ENCODE measurements at regions of chr21 and their contacts with region 1.

Region 1: GRCh38 chr21:28856588-28857250 is 136.0 kb downstream of the LTN1 start:
- DNase-seq: no peak
- ATAC-seq: no peak
- H3K4me3 ChIP-seq: no peak overlapping the region
- H3K4me3 Mint-ChIP-seq: no peak overlapping the region
- H3K27ac ChIP-seq: no peak overlapping the region
- H3K27ac Mint-ChIP-seq: no peak overlapping the region
- H3K4me1 ChIP-seq: no peaks in the 10 kb centered on the region
- H3K4me1 Mint-ChIP-seq: peaks cover 0 to 17% (median 7%) of the 10 kb centered on the region in 7 donors
- H3K27me3 ChIP-seq: no peaks in the 10 kb centered on the region
- H3K27me3 Mint-ChIP-seq: no peaks in the 10 kb centered on the region

Region 2: GRCh38 chr21:28754127-28754611 is 102.5 kb before region 1 on chr21:
- CTCF ChIA-PET with region 1: no interaction called
- POLR2A ChIA-PET with region 1: no interaction called
- intact Hi-C with region 1: no loop called
- DNase-seq: no peak
- ATAC-seq: no peak
- H3K4me3 ChIP-seq: no peak overlapping the region
- H3K4me3 Mint-ChIP-seq: no peak overlapping the region
- H3K27ac ChIP-seq: no peak overlapping the region
- H3K27ac Mint-ChIP-seq: peak overlapping the region in 2 of 9 donors; percentile 7 to 23
- H3K4me1 ChIP-seq: no peaks in the 10 kb centered on the region
- H3K4me1 Mint-ChIP-seq: peaks cover 0 to 6% (median 0%) of the 10 kb centered on the region in 7 donors
- H3K27me3 ChIP-seq: no peaks in the 10 kb centered on the region
- H3K27me3 Mint-ChIP-seq: no peaks in the 10 kb centered on the region

Region 3: GRCh38 chr21:28832013-28832714 is 24.6 kb before region 1 on chr21:
- CTCF ChIA-PET with region 1: no interaction called
- POLR2A ChIA-PET with region 1: no interaction called
- intact Hi-C with region 1: loop called in 1 of 2 experiments (anchors 2 kb)
- DNase-seq: peak in 6 of 9 donors; percentile 29 to 64 (median 52)
- ATAC-seq: peak; percentile 91
- H3K4me3 ChIP-seq: peak overlapping the region; percentile 21
- H3K4me3 Mint-ChIP-seq: peak overlapping the region; percentile 12 to 75 (median 68)
- H3K27ac ChIP-seq: no peak overlapping the region
- H3K27ac Mint-ChIP-seq: peak overlapping the region; percentile 2 to 97 (median 68)
- H3K4me1 ChIP-seq: peaks cover 52 to 56% of the 10 kb centered on the region in 2 donors
- H3K4me1 Mint-ChIP-seq: peaks cover 46 to 82% (median 76%) of the 10 kb centered on the region in 7 donors
- H3K27me3 ChIP-seq: no peaks in the 10 kb centered on the region
- H3K27me3 Mint-ChIP-seq: no peaks in the 10 kb centered on the region

Region 4: DNA sequence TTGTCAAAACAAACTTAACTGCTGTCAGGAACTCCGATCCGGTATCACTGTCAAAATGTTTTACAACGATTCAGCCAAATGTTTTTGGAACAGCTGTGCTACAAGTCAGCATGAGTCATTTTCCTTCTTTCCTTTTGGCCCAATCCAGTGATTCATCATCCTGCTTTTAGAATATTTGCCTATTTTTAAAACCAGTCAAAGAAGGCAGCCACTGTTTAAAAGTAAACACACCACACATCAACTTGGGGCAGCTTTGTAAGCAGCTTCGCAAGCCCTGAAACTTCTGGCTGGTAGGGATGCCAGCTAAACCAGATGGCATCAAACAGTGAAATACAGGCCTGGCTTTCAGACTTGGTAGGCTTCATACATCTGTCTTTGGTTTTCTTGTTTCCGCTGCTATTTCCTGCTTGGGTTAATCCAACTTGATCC is 288.6 kb after region 1 on chr21:
- CTCF ChIA-PET with region 1: no interaction called
- POLR2A ChIA-PET with region 1: no interaction called
- intact Hi-C with region 1: no loop called
- DNase-seq: peak in 3 of 9 donors; percentile 1 to 19 (median 6)
- ATAC-seq: peak; percentile 16
- H3K4me3 ChIP-seq: no peak overlapping the region
- H3K4me3 Mint-ChIP-seq: peak overlapping the region in 2 of 10 donors; percentile 26 to 32
- H3K27ac ChIP-seq: no peak overlapping the region
- H3K27ac Mint-ChIP-seq: peak overlapping the region in 4 of 9 donors; percentile 12 to 78 (median 68)
- H3K4me1 ChIP-seq: no peaks in the 10 kb centered on the region
- H3K4me1 Mint-ChIP-seq: peaks cover 0 to 19% (median 7%) of the 10 kb centered on the region in 7 donors
- H3K27me3 ChIP-seq: no peaks in the 10 kb centered on the region
- H3K27me3 Mint-ChIP-seq: peaks cover 0 to 3% (median 0%) of the 10 kb centered on the region in 5 donors